ENCODE measurements at regions of chr6 and their contacts with region 1.

Region 1: GRCh38 chr6:2988426-2989331 is 11.0 kb upstream of the NQO2 start:
- DNase-seq: peak; percentile 86
- ATAC-seq: peak; percentile 89
- H3K4me3 ChIP-seq: peak overlapping the region; percentile 72 to 81 (median 78)
- H3K27ac ChIP-seq: peak overlapping the region; percentile 96
- H3K4me1 ChIP-seq: peaks cover 61% of the 10 kb centered on the region
- H3K27me3 ChIP-seq: no peaks in the 10 kb centered on the region; a peak in 1 of 5 replicates
- CTCF ChIP-seq: peak; percentile 93
- EP300 ChIP-seq: peak in 1 of 2 experiments; percentile 10; a peak in 2 of 4 replicates
- POLR2A ChIP-seq: peak; percentile 72 to 80
- RAD21 ChIP-seq: peak; percentile 99

Region 2: DNA sequence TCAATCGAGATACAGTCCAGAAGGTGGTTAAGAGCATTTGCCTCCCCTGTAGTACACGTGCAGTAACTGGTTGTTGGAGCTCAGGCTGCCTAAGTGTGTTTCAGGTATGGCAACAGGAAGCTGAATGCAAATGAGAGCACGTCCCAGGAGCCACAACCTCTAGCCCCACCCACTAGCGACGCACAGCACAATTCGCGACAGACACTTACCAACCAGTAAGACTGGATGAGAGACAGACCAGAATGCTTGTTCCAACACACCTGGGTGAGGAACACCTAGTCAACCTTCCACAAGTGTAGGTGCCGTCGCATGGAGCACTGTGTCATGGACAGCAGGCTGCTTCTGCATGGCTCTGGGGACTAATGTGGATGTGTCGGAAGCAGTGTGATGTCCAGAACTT is 139.8 kb before region 1 on chr6:
- CTCF ChIA-PET with region 1: interaction called, 3 read pairs
- POLR2A ChIA-PET with region 1: interaction called, 11 read pairs
- in situ Hi-C with region 1: no loop called
- intact Hi-C with region 1: loop called (anchors 2 kb)
- DNase-seq: no peak
- ATAC-seq: no peak
- H3K4me3 ChIP-seq: no peak overlapping the region
- H3K27ac ChIP-seq: no peak overlapping the region
- H3K4me1 ChIP-seq: peaks cover 63% of the 10 kb centered on the region
- H3K27me3 ChIP-seq: no peaks in the 10 kb centered on the region
- CTCF ChIP-seq: no peak
- EP300 ChIP-seq: no peak
- POLR2A ChIP-seq: no peak
- RAD21 ChIP-seq: no peak

Region 3: GRCh38 chr6:2870056-2870674 is 118.5 kb before region 1 on chr6:
- CTCF ChIA-PET with region 1: no interaction called
- POLR2A ChIA-PET with region 1: no interaction called
- in situ Hi-C with region 1: no loop called
- intact Hi-C with region 1: no loop called
- DNase-seq: no peak
- ATAC-seq: no peak
- H3K4me3 ChIP-seq: no peak overlapping the region
- H3K27ac ChIP-seq: no peak overlapping the region
- H3K4me1 ChIP-seq: peaks cover 53% of the 10 kb centered on the region
- H3K27me3 ChIP-seq: no peaks in the 10 kb centered on the region
- CTCF ChIP-seq: no peak
- EP300 ChIP-seq: no peak
- POLR2A ChIP-seq: no peak
- RAD21 ChIP-seq: no peak

Region 4: DNA sequence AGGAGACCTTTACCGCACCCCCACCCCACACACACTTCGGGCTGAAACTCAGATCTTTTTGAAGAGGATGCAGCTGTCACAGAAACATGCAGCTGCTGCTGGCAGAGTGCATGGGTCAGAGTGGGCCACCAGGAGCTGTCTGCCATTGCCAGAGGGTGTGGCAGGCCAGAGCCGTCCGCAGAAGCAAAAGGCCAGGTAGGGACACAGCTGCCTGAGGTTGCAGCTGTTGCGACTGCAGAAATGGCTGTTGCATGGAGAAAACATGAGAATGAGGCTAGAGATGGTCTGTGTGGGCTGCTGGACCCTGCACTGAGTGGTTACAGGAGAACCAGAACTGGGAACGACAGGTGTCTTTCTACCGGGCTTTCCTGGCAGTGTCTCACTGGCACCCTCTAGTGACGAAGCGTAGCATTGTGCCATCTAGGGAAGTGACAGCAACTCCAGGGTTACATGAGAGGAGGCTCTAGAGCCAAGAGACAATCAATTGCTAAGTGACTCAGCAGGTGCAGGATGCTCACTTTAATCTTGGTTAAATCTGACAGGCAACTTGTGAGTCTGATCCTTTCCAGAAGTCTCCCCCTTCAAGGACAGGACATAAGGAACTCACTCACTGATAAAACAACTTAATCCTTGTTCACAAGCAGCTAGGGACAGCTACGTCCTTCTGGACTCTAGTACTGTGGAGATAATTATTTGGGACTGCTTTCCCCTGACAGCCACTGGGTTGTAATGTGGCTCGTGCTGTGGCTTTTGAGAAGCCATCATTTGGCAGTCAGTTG is 56.5 kb before region 1 on chr6:
- CTCF ChIA-PET with region 1: interaction called, 4 read pairs
- POLR2A ChIA-PET with region 1: interaction called, 11 read pairs
- in situ Hi-C with region 1: no loop called
- intact Hi-C with region 1: no loop called
- DNase-seq: peak; percentile 85
- ATAC-seq: peak; percentile 99
- H3K4me3 ChIP-seq: peak overlapping the region in 1 of 3 experiments; percentile 63; a peak in 2 of 6 replicates
- H3K27ac ChIP-seq: no peak overlapping the region
- H3K4me1 ChIP-seq: peaks cover 10% of the 10 kb centered on the region
- H3K27me3 ChIP-seq: peaks cover 0 to 3% of the 10 kb centered on the region in 2 experiments; a peak in 2 of 5 replicates
- CTCF ChIP-seq: peak; percentile 99
- EP300 ChIP-seq: no peak
- POLR2A ChIP-seq: no peak
- RAD21 ChIP-seq: peak; percentile 96

Region 5: GRCh38 chr6:2952557-2953095 is 36.1 kb before region 1 on chr6:
- CTCF ChIA-PET with region 1: interaction called, 60 read pairs
- POLR2A ChIA-PET with region 1: interaction called, 57 read pairs
- in situ Hi-C with region 1: loop called (anchors 5 kb)
- intact Hi-C with region 1: loop called (anchors 1 kb)
- DNase-seq: peak; percentile 72
- ATAC-seq: peak; percentile 92
- H3K4me3 ChIP-seq: peak overlapping the region in 2 of 3 experiments; percentile 13 to 47; a peak in 5 of 6 replicates
- H3K27ac ChIP-seq: no peak overlapping the region
- H3K4me1 ChIP-seq: peaks cover 29% of the 10 kb centered on the region
- H3K27me3 ChIP-seq: no peaks in the 10 kb centered on the region
- CTCF ChIP-seq: peak; percentile 99
- EP300 ChIP-seq: 0 out of 4 replicates have a peak, but pooled peaks of 1 of the 2 experiments have one; percentile 10
- POLR2A ChIP-seq: no peak
- RAD21 ChIP-seq: peak; percentile 93

Region 6: GRCh38 chr6:2976571-2977085 is 12.1 kb before region 1 on chr6:
- CTCF ChIA-PET with region 1: no interaction called
- POLR2A ChIA-PET with region 1: interaction called, 25 read pairs
- in situ Hi-C with region 1: no loop called
- intact Hi-C with region 1: loop called (anchors 2 kb)
- DNase-seq: no peak
- ATAC-seq: no peak
- H3K4me3 ChIP-seq: no peak overlapping the region
- H3K27ac ChIP-seq: no peak overlapping the region
- H3K4me1 ChIP-seq: peaks cover 67% of the 10 kb centered on the region
- H3K27me3 ChIP-seq: peaks cover 2 to 11% of the 10 kb centered on the region in 2 experiments; a peak in 2 of 5 replicates
- CTCF ChIP-seq: no peak
- EP300 ChIP-seq: no peak
- POLR2A ChIP-seq: no peak
- RAD21 ChIP-seq: no peak

Region 7: DNA sequence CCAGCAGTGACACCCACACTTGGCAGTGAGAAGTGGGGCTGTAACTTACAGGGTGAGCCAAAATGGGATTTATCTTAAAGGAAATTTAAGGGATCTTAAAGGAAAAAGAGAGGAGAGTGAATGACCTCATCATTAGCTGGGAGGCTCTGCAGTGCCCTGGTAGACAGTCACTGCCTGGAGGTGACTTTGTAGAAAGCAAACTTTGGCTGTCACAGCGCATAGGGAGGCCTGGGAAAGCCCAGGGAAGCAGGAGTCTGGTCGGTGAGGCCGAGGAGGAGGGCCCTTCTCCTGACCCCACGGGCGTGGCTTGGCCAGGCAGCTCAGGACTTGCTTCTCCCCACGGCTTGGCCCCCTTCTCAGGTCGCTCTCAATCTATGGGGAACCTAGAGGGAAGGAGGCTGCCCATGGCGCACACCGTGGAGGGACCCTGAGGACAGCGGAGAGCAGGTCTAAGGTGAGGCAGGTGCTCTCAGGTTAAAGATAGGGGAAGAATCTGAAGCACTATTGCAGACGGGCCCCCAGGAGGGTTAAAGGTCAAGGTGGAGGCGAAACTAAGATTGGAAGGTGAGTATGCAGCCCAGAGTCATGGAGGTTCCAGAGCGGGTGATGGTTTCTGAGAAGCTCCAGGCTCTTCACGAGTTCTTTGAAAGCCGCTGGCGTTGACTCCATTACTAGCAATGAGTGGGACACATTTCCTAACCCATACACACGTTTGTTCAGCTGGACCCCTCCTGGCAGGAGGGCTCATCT is 64.0 kb after region 1 on chr6:
- CTCF ChIA-PET with region 1: no interaction called
- POLR2A ChIA-PET with region 1: interaction called, 40 read pairs
- in situ Hi-C with region 1: no loop called
- intact Hi-C with region 1: no loop called
- DNase-seq: no peak
- ATAC-seq: peak; percentile 35
- H3K4me3 ChIP-seq: peak overlapping the region; percentile 57 to 80 (median 72)
- H3K27ac ChIP-seq: peak overlapping the region; percentile 85
- H3K4me1 ChIP-seq: peaks cover 46% of the 10 kb centered on the region
- H3K27me3 ChIP-seq: peaks cover 0 to 30% of the 10 kb centered on the region in 2 experiments; a peak in 2 of 5 replicates
- CTCF ChIP-seq: no peak; the same call in 1 of the 2 replicates
- EP300 ChIP-seq: 0 out of 4 replicates have a peak, but pooled peaks of 1 of the 2 experiments have one; percentile 19
- POLR2A ChIP-seq: no peak
- RAD21 ChIP-seq: no peak

Region 8: DNA sequence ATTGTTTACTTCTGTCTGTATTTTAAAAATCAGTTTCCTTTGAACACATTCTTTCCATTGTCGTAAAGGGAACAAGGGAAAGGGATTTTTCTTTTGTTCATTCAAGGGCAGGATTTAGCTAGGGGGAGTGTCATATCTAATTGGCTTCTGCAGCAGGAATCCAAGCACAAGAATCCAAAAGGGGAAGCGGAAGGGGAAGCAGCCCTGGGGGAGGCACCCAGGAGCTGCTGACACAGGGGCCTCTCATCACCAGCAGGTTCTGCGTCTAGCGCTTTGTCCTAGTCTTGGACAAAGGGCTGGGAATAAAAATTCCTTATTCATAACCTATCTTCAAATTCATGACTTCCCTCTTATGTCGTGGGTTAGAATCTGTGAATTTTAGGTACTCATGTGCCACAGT is 93.3 kb after region 1 on chr6:
- CTCF ChIA-PET with region 1: no interaction called
- POLR2A ChIA-PET with region 1: no interaction called
- in situ Hi-C with region 1: no loop called
- intact Hi-C with region 1: no loop called
- DNase-seq: no peak
- ATAC-seq: no peak
- H3K4me3 ChIP-seq: no peak overlapping the region
- H3K27ac ChIP-seq: no peak overlapping the region
- H3K4me1 ChIP-seq: no peaks in the 10 kb centered on the region
- H3K27me3 ChIP-seq: no peaks in the 10 kb centered on the region
- CTCF ChIP-seq: no peak
- EP300 ChIP-seq: no peak
- POLR2A ChIP-seq: no peak
- RAD21 ChIP-seq: no peak

Region 9: GRCh38 chr6:3102875-3103274 is 114.2 kb after region 1 on chr6:
- CTCF ChIA-PET with region 1: no interaction called
- POLR2A ChIA-PET with region 1: no interaction called
- in situ Hi-C with region 1: no loop called
- intact Hi-C with region 1: no loop called
- DNase-seq: no peak
- ATAC-seq: no peak
- H3K4me3 ChIP-seq: no peak overlapping the region
- H3K27ac ChIP-seq: no peak overlapping the region
- H3K4me1 ChIP-seq: no peaks in the 10 kb centered on the region
- H3K27me3 ChIP-seq: no peaks in the 10 kb centered on the region
- CTCF ChIP-seq: no peak
- EP300 ChIP-seq: no peak
- POLR2A ChIP-seq: no peak
- RAD21 ChIP-seq: no peak

Region 10: GRCh38 chr6:3258720-3259490 is 270.2 kb after region 1 on chr6 and contains the start of gene PSMG4:
- CTCF ChIA-PET with region 1: no interaction called
- POLR2A ChIA-PET with region 1: no interaction called
- in situ Hi-C with region 1: loop called (anchors 10 kb)
- intact Hi-C with region 1: no loop called
- DNase-seq: peak; percentile 84
- ATAC-seq: peak; percentile 89
- H3K4me3 ChIP-seq: peak within 1 kb of the TSS; percentile 92 to 96 (median 96)
- H3K27ac ChIP-seq: peak within 1 kb of the TSS; percentile 70
- H3K4me1 ChIP-seq: peaks cover 50% of the 10 kb centered on the region
- H3K27me3 ChIP-seq: peaks cover 0 to 32% of the 10 kb centered on the region in 2 experiments; a peak in 3 of 5 replicates
- CTCF ChIP-seq: peak; percentile 36
- EP300 ChIP-seq: no peak; a peak in 2 of 4 replicates
- POLR2A ChIP-seq: peak; percentile 79 to 89
- RAD21 ChIP-seq: peak; percentile 37; the same call in 1 of the 2 replicates
- total RNA-seq, gene PSMG4: 24.5 and 32.8 TPM in 2 replicates